Panc1 (cell line): ENCODE measurements at regions of chrX and their contacts with region 1.

Region 1: DNA sequence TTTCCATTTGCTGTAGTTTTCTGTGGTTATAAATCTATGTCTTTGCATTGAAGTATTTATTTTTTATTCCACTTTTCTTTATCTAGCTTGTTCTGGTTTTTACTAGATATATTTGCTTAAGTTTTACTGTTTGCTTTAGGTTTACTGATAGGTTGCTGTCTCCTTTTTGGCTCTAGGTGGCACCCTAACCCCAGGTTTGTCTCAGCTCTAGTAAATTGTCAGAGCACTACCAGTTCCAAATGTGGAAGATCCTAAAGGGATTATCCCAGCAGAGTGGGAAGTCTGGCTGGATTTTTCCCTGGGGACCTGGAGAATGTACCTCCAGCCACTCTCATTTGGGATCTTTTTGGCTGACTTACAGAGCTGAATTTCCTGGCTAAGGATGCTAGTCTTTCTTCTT is 106.1 kb downstream of the PBDC1 start:
- DNase-seq: peak; percentile 41
- ATAC-seq: peak; percentile 87
- H3K4me3 ChIP-seq: no peak overlapping the region
- H3K27ac ChIP-seq: no peak overlapping the region
- H3K4me1 ChIP-seq: no peaks in the 10 kb centered on the region
- H3K27me3 ChIP-seq: no peaks in the 10 kb centered on the region
- CTCF ChIP-seq: peak; percentile 72

Region 2: DNA sequence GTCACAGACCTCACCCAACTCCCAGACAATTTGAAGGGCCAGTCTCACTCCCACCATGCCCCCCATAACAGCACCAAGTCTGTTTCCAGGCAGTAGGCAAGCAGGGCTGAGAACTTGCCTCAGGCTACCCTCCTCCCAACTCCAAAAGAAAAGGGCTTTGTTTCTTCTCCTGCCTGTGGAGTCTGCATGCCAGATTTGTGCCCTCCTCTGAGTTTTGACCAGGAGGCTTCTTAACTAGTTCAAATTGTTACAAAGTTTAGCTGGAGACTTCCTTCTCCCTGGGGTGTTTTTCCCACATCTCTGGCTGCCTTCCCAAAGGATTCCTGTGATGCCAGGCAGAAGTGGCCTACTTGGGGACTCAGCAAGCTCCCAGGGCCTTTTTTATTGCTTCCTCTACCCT is 76.5 kb before region 1 on chrX:
- CTCF ChIA-PET with region 1: no interaction called
- POLR2A ChIA-PET with region 1: no interaction called
- in situ Hi-C with region 1: no loop called
- intact Hi-C with region 1: no loop called
- DNase-seq: no peak
- ATAC-seq: no peak
- H3K4me3 ChIP-seq: no peak overlapping the region
- H3K27ac ChIP-seq: no peak overlapping the region
- H3K4me1 ChIP-seq: no peaks in the 10 kb centered on the region
- H3K27me3 ChIP-seq: no peaks in the 10 kb centered on the region
- CTCF ChIP-seq: no peak

Region 3: DNA sequence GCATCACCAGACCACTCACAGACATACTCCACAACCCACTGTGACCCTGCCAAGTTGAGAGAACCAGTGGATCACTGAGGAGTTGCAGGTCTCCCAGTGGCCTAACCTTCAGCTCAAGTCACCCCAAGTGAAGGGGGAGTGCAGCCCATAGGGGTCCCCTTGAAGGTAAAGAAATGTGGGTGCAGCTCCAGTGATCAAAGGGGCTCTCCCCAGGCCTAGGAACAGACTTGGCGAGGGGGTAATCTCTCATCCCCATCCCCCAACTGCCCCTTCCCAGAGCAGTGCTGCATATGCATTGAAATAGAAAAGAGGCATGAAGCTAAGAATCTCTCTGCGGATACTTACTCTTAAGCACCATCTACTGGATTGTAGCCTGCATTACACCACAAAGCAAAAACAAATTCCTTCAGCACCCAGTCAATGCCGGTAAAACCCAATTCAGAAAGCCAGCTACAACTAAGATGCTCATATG is 175.5 kb after region 1 on chrX:
- CTCF ChIA-PET with region 1: interaction called, 13 read pairs
- POLR2A ChIA-PET with region 1: no interaction called
- in situ Hi-C with region 1: no loop called
- intact Hi-C with region 1: loop called (anchors 2 kb)
- DNase-seq: peak; percentile 30
- ATAC-seq: no peak
- H3K4me3 ChIP-seq: no peak overlapping the region
- H3K27ac ChIP-seq: no peak overlapping the region
- H3K4me1 ChIP-seq: no peaks in the 10 kb centered on the region
- H3K27me3 ChIP-seq: no peaks in the 10 kb centered on the region
- CTCF ChIP-seq: peak; percentile 71

Region 4: GRCh38 chrX:78199851-78200250 is 1920.9 kb after region 1 on chrX:
- CTCF ChIA-PET with region 1: interaction called, 11 read pairs
- POLR2A ChIA-PET with region 1: no interaction called
- in situ Hi-C with region 1: no loop called
- intact Hi-C with region 1: no loop called
- DNase-seq: no peak
- ATAC-seq: peak; percentile 78; the same call in 1 of the 2 replicates
- H3K4me3 ChIP-seq: no peak overlapping the region
- H3K27ac ChIP-seq: no peak overlapping the region
- H3K4me1 ChIP-seq: no peaks in the 10 kb centered on the region
- H3K27me3 ChIP-seq: no peaks in the 10 kb centered on the region
- CTCF ChIP-seq: peak; percentile 41; the same call in 1 of the 2 replicates